Pancreas (tissue), 10 donors: ENCODE measurements at regions of chr3 and their contacts with region 1.

Region 1: GRCh38 chr3:118884748-118885206 is 149.9 kb downstream of the IGSF11 start:
- DNase-seq: peak; percentile 67 to 92 (median 84)
- ATAC-seq: peak; percentile 88 to 98 (median 96)
- H3K4me3 ChIP-seq: no peak overlapping the region
- H3K27ac ChIP-seq: no peak overlapping the region
- H3K4me1 ChIP-seq: no peaks in the 10 kb centered on the region
- H3K27me3 ChIP-seq: no peaks in the 10 kb centered on the region
- CTCF ChIP-seq: peak; percentile 76 to 86 (median 84)

Region 2: DNA sequence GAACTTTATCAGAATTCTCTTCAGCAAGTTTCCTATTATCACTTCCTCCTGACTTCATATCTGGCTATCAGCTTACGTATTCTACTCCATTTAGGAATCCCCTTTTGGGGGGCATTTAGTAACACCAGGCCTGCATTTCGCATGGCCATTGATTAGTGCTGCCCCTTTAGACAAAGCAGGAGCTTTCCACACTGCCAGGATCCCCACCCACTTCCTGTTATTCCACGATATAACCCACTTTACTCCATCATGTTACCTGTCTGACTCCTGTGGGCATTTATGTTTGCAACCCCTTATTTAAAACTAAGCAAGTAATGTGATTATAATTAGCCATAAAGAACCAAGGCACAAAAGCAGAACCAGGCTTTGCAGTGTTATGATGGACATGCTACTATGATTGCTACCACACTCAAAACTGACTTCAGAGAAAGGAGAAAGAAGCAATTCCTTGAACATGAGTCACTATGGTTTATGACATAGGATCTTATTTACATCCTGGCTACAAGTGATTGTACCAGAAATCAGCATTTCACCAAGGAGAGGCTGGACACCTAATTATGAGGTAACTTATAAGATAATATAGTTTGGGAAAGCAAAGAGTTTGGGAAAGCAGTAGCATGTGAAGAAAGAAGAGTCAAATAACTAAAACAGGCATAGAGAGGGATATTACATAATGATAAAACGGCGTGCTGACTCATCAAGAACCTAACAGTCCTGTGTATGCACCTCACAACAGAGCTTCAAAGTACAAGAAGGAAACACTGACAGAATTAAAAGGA is 53.6 kb after region 1 on chr3:
- intact Hi-C with region 1: no loop called
- DNase-seq: no peak
- ATAC-seq: no peak
- H3K4me3 ChIP-seq: no peak overlapping the region
- H3K27ac ChIP-seq: no peak overlapping the region
- H3K4me1 ChIP-seq: no peaks in the 10 kb centered on the region
- H3K27me3 ChIP-seq: no peaks in the 10 kb centered on the region
- CTCF ChIP-seq: no peak

Region 3: GRCh38 chr3:119034256-119035013 is 149.7 kb after region 1 on chr3 and contains the start of gene IGSF11:
- intact Hi-C with region 1: loop called in 2 of 3 experiments (anchors 5 to 10 kb)
- DNase-seq: peak; percentile 68 to 92 (median 84)
- ATAC-seq: peak; percentile 91 to 96 (median 92)
- H3K4me3 ChIP-seq: peak within 1 kb of the TSS; percentile 47 to 77 (median 61)
- H3K27ac ChIP-seq: peak within 1 kb of the TSS; percentile 72 to 85 (median 75)
- H3K4me1 ChIP-seq: peaks cover 0 to 4% (median 0%) of the 10 kb centered on the region in 3 donors
- H3K27me3 ChIP-seq: peaks cover 0 to 5% (median 0%) of the 10 kb centered on the region in 4 donors
- CTCF ChIP-seq: peak; percentile 36 to 50 (median 42)
- total RNA-seq, gene IGSF11: 1.5 to 6.4 (median 3.3) TPM

Region 4: DNA sequence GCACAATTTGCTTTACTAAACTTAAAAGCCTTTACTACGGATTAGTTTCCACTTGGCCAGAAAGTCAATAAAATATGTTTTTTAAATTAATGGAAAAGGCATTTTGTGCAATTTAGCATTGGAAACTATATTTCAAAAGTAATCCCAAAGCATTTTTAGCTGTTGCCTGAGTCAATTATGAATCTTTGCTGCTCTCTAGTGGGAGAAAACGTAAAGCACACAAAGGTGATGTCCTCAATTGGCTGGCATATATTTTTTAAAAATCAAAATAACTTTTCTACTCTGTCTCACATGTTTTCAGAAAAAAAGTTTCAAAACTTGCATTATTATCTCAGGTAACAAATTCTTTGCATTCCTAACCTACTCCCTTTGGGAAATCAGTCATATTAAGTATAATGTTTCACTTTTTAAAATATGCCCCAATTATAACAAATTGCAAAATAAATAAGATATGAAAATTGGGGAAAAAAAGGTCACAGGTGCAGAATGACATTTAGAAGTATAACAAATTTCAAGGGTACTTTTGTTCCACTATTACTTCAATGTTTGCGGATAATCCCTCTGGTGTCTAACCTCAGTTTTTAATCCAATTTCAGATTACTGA is 213.9 kb after region 1 on chr3:
- intact Hi-C with region 1: loop called (anchors 5 to 10 kb)
- DNase-seq: no peak
- ATAC-seq: peak in 3 of 4 donors; percentile 61 to 71 (median 64)
- H3K4me3 ChIP-seq: no peak overlapping the region
- H3K27ac ChIP-seq: no peak overlapping the region
- H3K4me1 ChIP-seq: no peaks in the 10 kb centered on the region
- H3K27me3 ChIP-seq: no peaks in the 10 kb centered on the region
- CTCF ChIP-seq: peak; percentile 32 to 53 (median 50)